ENCODE measurements at regions of chr1 and their contacts with region 1.

Region 1: DNA sequence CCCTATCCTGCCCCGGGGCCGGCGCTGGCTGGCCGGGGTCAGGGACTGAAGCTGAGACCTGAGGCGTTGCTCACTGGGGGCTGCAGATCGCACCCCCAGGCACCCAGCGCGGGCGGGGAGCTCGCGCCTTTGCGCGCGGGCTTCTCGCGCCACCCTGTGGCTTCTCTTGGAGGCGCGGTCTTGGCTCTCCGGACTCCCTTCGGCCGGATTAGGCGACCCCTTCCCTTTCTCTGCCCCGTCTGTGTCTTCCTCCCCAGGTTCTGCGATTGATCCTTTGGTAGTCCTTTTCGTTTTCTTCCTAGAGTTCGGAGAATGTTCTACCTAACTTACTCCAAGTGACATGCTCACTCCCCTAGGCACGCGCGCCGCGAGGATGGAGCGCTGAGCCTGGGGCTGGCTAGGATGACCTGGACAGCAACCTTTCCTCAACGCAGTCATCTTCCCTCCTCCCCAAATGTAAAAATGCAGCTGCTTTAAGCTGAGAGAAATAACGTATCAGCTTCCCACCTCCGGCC is 495 bp upstream of the NTRK1 start:
- DNase-seq: no peak
- H3K4me3 ChIP-seq: peak overlapping the region; percentile 30
- H3K27me3 ChIP-seq: peaks cover 56% of the 10 kb centered on the region
- CTCF ChIP-seq: peak; percentile 84

Region 2: DNA sequence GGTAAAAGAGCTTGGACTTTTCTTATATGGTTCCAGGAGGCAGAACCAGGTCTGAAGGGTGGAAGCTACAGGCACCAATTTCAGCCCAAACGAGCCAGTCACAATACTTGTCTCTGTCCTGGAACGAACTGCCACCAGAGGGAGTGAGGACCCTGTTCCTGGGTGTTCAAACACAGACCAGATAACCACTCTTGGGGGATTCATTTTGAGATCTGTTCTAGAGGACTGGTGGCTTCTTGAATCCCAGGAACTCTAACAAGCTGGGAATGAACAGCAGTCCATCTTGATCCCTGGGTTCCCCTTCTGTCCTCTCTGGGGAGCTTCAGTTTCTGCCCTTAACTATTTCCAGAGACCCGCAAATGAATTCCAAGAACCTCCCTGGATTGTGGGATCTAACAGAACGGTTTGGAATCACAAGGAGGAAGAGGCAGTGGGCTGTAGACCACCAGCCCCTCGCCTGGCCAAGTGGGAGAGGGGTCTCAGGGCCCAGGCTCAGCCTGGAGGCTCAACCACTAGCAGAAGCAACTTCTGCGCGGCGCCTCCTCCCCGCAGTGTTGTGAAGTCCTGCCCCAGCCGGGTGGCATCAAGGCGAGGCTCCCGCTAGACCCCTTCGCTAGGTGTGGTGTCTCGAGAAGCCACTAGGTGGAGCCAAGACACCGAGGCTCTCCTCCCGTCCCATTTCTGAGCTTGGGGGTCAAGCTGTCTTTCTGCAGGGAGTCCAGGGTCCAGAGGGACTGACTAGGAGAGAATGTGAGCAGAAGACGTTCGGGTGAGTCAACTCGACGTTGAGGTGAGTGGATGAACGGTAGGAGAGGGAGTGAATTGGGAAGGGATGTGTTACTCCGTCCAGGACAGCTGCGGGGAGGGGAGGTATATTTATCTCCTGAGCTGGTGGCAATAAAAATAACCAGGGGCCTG is 170.9 kb before region 1 on chr1:
- CTCF ChIA-PET with region 1: interaction called, 115 read pairs
- POLR2A ChIA-PET with region 1: no interaction called
- DNase-seq: no peak
- H3K4me3 ChIP-seq: peak overlapping the region; percentile 15; the same call in 1 of the 2 replicates
- H3K27me3 ChIP-seq: no peaks in the 10 kb centered on the region
- CTCF ChIP-seq: peak; percentile 95

Region 3: DNA sequence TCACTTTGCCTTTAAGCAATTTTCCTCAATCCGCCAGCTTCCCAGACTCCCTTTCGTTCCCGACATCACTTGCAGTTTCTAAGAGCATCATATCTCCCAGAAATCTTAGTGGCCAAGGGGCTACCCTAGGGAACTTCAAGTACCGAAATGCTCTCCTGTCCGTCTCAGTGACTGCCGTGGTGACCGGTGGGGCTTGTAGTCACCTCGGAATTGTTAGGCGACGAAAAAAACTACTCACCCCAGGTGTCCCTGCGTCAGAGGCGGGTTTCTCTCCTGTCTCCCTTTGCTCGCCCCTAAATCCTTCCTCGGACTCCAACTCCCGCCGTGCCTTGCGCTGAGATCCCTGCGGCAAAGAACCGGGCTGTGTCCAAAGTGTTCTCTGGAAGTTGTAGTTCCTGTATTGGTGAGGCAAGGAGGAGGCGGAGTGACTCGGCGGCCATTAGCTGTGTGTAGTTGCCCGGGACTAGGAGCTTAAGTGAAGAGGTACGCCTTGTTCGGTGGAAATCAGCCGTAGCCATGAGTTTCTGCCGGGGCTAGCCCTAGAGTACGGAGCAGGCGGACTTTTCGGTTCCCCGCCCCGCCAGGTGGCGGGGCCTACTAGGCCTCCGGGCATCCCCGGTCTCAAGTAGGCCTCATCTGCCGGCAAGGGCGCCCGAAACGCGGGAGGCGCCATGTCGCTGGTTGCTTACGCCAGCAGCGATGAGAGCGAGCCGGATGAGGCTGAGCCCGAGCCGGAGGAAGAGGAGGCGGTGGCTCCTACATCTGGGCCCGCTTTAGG is 92.9 kb before region 1 on chr1 and contains the start of gene PRCC:
- CTCF ChIA-PET with region 1: interaction called, 11 read pairs
- POLR2A ChIA-PET with region 1: no interaction called
- DNase-seq: peak; percentile 100
- H3K4me3 ChIP-seq: peak within 1 kb of the TSS; percentile 97
- H3K27me3 ChIP-seq: no peaks in the 10 kb centered on the region
- CTCF ChIP-seq: no peak
- polyA plus RNA-seq, gene PRCC: 60.3 and 93.6 TPM in 2 replicates

Region 4: GRCh38 chr1:156804572-156805243 is 55.5 kb before region 1 on chr1:
- CTCF ChIA-PET with region 1: interaction called, 290 read pairs
- POLR2A ChIA-PET with region 1: interaction called, 3 read pairs
- DNase-seq: no peak
- H3K4me3 ChIP-seq: no peak overlapping the region
- H3K27me3 ChIP-seq: no peaks in the 10 kb centered on the region
- CTCF ChIP-seq: no peak

Region 5: DNA sequence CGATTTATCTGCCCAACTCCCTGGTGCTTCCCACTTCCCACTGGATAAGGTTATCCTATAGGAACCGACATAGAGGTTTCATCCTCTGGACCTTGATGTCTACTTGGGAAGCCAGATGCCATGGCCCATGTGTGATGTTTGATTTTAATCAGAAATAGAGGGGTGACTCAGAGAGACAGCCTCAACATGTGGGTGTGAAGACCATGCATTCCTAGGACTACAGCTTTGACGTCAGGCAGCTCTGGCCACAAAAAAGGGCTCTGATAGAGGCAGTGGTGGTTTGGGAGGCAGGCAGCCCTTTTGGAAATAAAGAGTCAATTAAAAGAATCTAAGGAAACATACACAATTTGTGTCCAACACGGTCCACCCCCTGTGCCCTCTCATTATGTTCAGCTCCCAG is 38.4 kb before region 1 on chr1:
- CTCF ChIA-PET with region 1: interaction called, 16 read pairs
- POLR2A ChIA-PET with region 1: no interaction called
- DNase-seq: no peak
- H3K4me3 ChIP-seq: no peak overlapping the region
- H3K27me3 ChIP-seq: peaks cover 5% of the 10 kb centered on the region
- CTCF ChIP-seq: no peak

Region 6: GRCh38 chr1:156838981-156839410 is 21.2 kb before region 1 on chr1:
- CTCF ChIA-PET with region 1: interaction called, 174 read pairs
- POLR2A ChIA-PET with region 1: no interaction called
- DNase-seq: no peak
- H3K4me3 ChIP-seq: no peak overlapping the region
- H3K27me3 ChIP-seq: peaks cover 30% of the 10 kb centered on the region
- CTCF ChIP-seq: peak; percentile 92

Region 7: GRCh38 chr1:156892190-156893047 is 32.2 kb after region 1 on chr1:
- CTCF ChIA-PET with region 1: interaction called, 107 read pairs
- POLR2A ChIA-PET with region 1: no interaction called
- DNase-seq: no peak
- H3K4me3 ChIP-seq: peak overlapping the region; percentile 16
- H3K27me3 ChIP-seq: peaks cover 2% of the 10 kb centered on the region; the same call in 1 of the 2 replicates
- CTCF ChIP-seq: peak; percentile 91

Region 8: GRCh38 chr1:156953571-156953970 is 93.4 kb after region 1 on chr1:
- CTCF ChIA-PET with region 1: no interaction called
- POLR2A ChIA-PET with region 1: no interaction called
- DNase-seq: no peak
- H3K4me3 ChIP-seq: no peak overlapping the region
- H3K27me3 ChIP-seq: no peaks in the 10 kb centered on the region
- CTCF ChIP-seq: no peak

Region 9: DNA sequence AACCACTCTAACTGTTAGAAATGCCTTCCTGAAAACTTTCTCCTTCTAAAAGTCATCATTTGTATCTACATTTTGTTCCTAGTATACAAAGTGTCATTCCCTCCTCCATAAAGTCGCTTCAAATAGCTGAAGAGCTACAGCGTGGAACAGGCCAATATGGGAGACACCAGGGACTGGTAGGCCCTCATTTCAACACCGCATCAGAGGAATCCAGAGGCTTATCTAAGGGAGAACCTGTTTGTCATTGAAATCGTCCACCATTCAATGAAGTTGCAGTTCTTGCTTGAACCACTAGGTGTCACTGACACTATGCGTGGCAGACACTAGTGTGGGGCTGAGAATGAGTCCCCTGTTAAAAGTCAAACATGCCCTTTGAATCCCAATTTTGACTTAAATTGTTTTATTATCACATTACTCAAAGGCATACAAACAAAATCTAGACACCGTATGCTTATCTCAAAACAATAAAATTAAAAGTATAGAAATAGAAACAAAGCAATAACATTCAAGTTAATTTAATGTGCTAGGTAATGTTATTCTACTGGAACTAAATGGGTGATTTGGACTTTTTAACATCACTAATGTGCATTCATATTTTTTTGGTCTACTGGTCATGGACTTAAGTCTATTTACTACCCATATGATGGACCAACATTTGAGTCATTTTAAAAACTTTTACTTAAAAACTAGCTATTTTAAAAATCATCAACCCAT is 509.8 kb after region 1 on chr1:
- CTCF ChIA-PET with region 1: no interaction called
- POLR2A ChIA-PET with region 1: no interaction called
- DNase-seq: no peak
- H3K4me3 ChIP-seq: no peak overlapping the region
- H3K27me3 ChIP-seq: no peaks in the 10 kb centered on the region
- CTCF ChIP-seq: peak; percentile 86